ENCODE measurements at regions of chr6 and their contacts with region 1.

Region 1: DNA sequence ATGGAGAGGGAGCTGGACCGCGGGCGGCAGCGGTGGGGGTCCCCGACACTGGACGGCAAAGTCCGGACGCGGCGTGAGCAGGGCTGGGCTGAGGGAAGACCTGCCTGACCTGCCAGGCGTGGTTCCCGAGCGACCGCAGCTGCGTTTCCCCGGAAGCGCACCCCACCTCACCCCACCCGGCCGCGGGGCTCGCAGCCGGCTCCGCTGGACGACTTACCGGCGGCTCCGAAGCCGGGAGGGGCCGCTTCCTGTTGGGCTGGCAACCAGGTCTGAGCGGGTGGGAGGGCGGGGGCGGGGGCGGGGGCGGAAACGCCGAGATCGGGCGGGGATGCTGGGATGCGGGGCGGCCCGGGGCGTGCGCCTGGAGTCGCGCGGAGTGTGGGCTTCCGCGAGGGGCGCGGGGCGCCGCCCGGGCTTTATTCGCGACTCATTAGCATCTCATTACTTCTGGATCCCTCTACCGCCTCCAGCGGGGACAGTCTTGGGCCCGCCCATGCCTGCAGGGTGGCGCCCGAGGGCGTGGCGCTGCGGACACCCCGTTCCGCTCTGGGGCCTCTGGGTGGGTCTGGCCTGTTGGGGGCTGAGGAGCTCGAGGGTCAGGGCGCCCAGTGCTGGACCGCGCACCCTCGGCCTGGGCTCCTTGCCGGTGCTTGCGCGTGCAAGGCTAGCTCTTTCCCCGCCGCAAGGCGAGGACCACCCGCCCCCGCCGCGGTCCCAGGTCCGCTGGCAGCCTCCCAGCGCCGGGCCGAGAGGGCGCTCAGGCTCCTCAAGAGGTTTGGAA is at the start of gene MICAL1:
- DNase-seq: peak; percentile 94
- ATAC-seq: peak; percentile 61
- H3K4me3 ChIP-seq: peak within 1 kb of the TSS; percentile 73 to 99 (median 93)
- H3K4me3 Mint-ChIP-seq: peak within 1 kb of the TSS; percentile 95
- H3K27ac ChIP-seq: peak within 1 kb of the TSS; percentile 98 to 99
- H3K27ac Mint-ChIP-seq: peak within 1 kb of the TSS; percentile 99
- H3K4me1 ChIP-seq: peaks cover 82 to 83% of the 10 kb centered on the region in 2 donors
- H3K4me1 Mint-ChIP-seq: peaks cover 82% of the 10 kb centered on the region
- H3K27me3 ChIP-seq: no peaks in the 10 kb centered on the region
- H3K27me3 Mint-ChIP-seq: no peaks in the 10 kb centered on the region
- CTCF ChIP-seq: peak; percentile 53
- total RNA-seq, gene MICAL1: 202 TPM in 2 replicates

Region 2: GRCh38 chr6:108423982-108424705 is 1031.5 kb before region 1 on chr6:
- CTCF ChIA-PET with region 1: no interaction called
- POLR2A ChIA-PET with region 1: no interaction called
- intact Hi-C with region 1: no loop called
- DNase-seq: no peak
- ATAC-seq: no peak
- H3K4me3 ChIP-seq: no peak overlapping the region
- H3K4me3 Mint-ChIP-seq: no peak overlapping the region
- H3K27ac ChIP-seq: no peak overlapping the region
- H3K27ac Mint-ChIP-seq: no peak overlapping the region
- H3K4me1 ChIP-seq: no peaks in the 10 kb centered on the region
- H3K4me1 Mint-ChIP-seq: no peaks in the 10 kb centered on the region
- H3K27me3 ChIP-seq: no peaks in the 10 kb centered on the region
- H3K27me3 Mint-ChIP-seq: no peaks in the 10 kb centered on the region
- CTCF ChIP-seq: no peak

Region 3: DNA sequence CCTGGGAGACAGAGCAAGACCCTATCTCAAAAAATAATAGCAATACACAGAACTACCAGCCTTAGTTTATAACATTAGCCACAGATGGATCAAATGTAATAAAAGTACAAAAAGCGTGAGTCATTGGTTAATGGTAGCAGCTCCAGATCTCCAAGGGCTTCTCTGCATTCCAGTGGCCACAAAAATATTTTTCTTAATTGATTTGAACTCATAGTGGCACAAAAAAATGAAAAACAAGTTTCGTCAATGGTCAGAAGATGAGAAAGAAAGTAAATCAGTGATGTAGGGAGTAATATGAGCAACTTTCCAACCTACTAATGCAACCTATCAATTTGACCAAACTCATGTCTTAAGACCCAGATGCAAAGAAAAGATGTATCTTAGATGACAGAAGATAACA is 280.8 kb before region 1 on chr6:
- CTCF ChIA-PET with region 1: no interaction called
- POLR2A ChIA-PET with region 1: no interaction called
- intact Hi-C with region 1: no loop called
- DNase-seq: no peak
- ATAC-seq: no peak
- H3K4me3 ChIP-seq: no peak overlapping the region
- H3K4me3 Mint-ChIP-seq: no peak overlapping the region
- H3K27ac ChIP-seq: no peak overlapping the region
- H3K27ac Mint-ChIP-seq: no peak overlapping the region
- H3K4me1 ChIP-seq: no peaks in the 10 kb centered on the region
- H3K4me1 Mint-ChIP-seq: no peaks in the 10 kb centered on the region
- H3K27me3 ChIP-seq: peaks cover 0 to 6% (median 0%) of the 10 kb centered on the region in 4 experiments
- H3K27me3 Mint-ChIP-seq: peaks cover 16% of the 10 kb centered on the region
- CTCF ChIP-seq: no peak

Region 4: GRCh38 chr6:109440331-109441068 is 15.2 kb before region 1 on chr6 and contains the starts of genes PPIL6 and SMPD2:
- CTCF ChIA-PET with region 1: interaction called, 55 read pairs
- POLR2A ChIA-PET with region 1: interaction called, 35 read pairs
- intact Hi-C with region 1: loop called (anchors 1 kb)
- DNase-seq: peak; percentile 94
- ATAC-seq: peak; percentile 87
- H3K4me3 ChIP-seq: peak within 1 kb of the TSS; percentile 0 to 93 (median 90)
- H3K4me3 Mint-ChIP-seq: peak within 1 kb of the TSS; percentile 97
- H3K27ac ChIP-seq: peak within 1 kb of the TSS; percentile 79 to 98
- H3K27ac Mint-ChIP-seq: peak within 1 kb of the TSS; percentile 96
- H3K4me1 ChIP-seq: peaks cover 21 to 30% of the 10 kb centered on the region in 2 donors
- H3K4me1 Mint-ChIP-seq: peaks cover 31% of the 10 kb centered on the region
- H3K27me3 ChIP-seq: no peaks in the 10 kb centered on the region
- H3K27me3 Mint-ChIP-seq: no peaks in the 10 kb centered on the region
- CTCF ChIP-seq: no peak
- total RNA-seq, gene PPIL6: 0.53 and 1.8 TPM in 2 replicates
- total RNA-seq, gene SMPD2: 35.7 and 36.4 TPM in 2 replicates

Region 5: GRCh38 chr6:109482905-109483735 is 27.4 kb after region 1 on chr6 and contains the start of gene ZBTB24:
- CTCF ChIA-PET with region 1: interaction called, 42 read pairs
- POLR2A ChIA-PET with region 1: interaction called, 11 read pairs
- intact Hi-C with region 1: loop called (anchors 1 kb)
- DNase-seq: peak; percentile 93
- ATAC-seq: peak; percentile 83
- H3K4me3 ChIP-seq: peak within 1 kb of the TSS; percentile 76 to 97 (median 94)
- H3K4me3 Mint-ChIP-seq: peak within 1 kb of the TSS; percentile 96
- H3K27ac ChIP-seq: peak within 1 kb of the TSS; percentile 65 to 81
- H3K27ac Mint-ChIP-seq: peak within 1 kb of the TSS; percentile 89
- H3K4me1 ChIP-seq: peaks cover 40 to 57% of the 10 kb centered on the region in 2 donors
- H3K4me1 Mint-ChIP-seq: peaks cover 50% of the 10 kb centered on the region
- H3K27me3 ChIP-seq: no peaks in the 10 kb centered on the region
- H3K27me3 Mint-ChIP-seq: no peaks in the 10 kb centered on the region
- CTCF ChIP-seq: no peak
- total RNA-seq, gene ZBTB24: 31.4 and 32.9 TPM in 2 replicates

Region 6: DNA sequence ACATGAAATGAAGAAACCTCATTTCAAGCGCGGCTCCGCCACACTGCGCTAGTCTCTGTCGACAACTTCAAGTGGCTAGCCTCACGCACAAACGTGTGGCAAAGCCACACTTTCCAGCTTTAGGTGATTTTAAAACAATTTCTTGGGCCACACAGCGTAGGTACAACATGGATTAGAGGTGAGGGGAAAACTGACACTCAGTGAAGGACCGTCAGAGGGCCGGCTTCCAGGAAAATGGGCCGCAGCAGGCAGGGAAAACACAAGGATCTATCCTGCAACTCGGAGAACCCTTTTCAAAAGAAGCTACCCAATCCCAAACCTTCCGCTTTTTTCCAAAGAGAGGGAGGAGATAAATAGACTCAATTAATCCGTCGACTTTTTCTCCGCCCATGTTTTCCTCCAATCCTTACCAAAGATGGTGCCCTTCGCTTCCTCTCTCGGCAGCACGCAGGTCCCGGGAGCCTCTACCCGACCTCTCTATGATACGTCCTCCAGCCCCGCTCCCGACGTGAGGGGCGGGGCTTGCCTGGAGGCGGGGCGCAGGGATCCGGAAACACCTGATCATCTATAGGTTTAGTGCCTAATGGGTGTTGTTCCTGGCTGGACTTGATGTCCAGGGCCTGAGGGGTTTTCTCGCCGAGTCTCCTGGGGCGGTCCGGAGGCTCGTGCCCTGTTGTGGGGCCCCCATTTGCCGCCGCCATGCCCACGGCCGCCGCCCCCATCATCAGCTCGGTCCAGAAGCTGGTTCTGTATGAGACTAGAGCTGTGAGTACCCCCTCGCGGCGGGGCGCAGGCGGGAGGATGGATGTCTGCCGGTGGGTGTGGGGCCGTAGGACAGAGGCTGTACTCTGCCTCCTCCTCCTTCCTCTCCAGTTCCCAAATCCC is 235.3 kb after region 1 on chr6 and contains the starts of genes AK9 and FIG4:
- CTCF ChIA-PET with region 1: no interaction called
- POLR2A ChIA-PET with region 1: interaction called, 6 read pairs
- intact Hi-C with region 1: loop called (anchors 1 kb)
- DNase-seq: peak; percentile 91
- ATAC-seq: peak; percentile 92
- H3K4me3 ChIP-seq: peak within 1 kb of the TSS; percentile 82 to 99 (median 93)
- H3K4me3 Mint-ChIP-seq: peak within 1 kb of the TSS; percentile 90
- H3K27ac ChIP-seq: peak within 1 kb of the TSS; percentile 77 to 93
- H3K27ac Mint-ChIP-seq: peak within 1 kb of the TSS; percentile 99
- H3K4me1 ChIP-seq: peaks cover 26 to 29% of the 10 kb centered on the region in 2 donors
- H3K4me1 Mint-ChIP-seq: peaks cover 39% of the 10 kb centered on the region
- H3K27me3 ChIP-seq: no peaks in the 10 kb centered on the region
- H3K27me3 Mint-ChIP-seq: no peaks in the 10 kb centered on the region
- CTCF ChIP-seq: peak; percentile 26
- total RNA-seq, gene AK9: 26.5 and 27.1 TPM in 2 replicates
- total RNA-seq, gene FIG4: 31.5 and 32.8 TPM in 2 replicates

Region 7: DNA sequence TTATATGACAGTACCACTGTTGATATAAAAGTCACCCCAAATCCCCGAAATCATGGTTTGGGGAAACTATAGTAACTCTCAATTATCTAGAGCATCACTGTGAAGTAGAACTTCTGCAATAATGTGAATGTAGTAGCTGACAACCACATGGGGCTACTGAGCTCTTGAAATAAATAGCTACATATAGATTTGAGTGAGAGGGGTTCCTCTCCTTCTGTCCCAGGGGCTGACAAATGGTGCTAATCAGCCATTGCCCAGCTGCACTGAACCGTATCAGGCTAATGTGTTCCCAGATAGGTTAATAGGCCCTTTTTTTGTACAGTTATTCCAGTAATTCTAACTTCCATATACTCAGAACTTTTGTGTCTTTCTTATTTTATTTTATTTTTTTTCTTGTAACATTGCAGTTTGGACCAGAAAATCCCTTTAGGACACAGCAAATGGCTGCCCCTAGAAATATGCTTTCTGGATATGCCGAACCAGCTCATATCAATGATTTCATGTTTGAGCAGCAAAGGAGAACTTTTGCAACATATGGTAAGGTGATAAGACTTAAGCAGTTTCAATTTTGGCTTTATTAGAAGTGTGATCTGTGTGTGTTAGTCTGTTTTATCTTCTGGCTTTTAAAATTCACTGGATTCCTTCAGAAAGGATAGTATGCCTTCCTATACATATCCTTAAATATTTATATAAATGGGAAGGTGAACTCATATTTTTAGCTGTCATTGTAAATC is 745.6 kb after region 1 on chr6:
- CTCF ChIA-PET with region 1: no interaction called
- POLR2A ChIA-PET with region 1: no interaction called
- intact Hi-C with region 1: loop called (anchors 10 kb)
- DNase-seq: no peak
- ATAC-seq: no peak
- H3K4me3 ChIP-seq: no peak overlapping the region
- H3K4me3 Mint-ChIP-seq: no peak overlapping the region
- H3K27ac ChIP-seq: peak overlapping the region in 1 of 2 donors; percentile 47
- H3K27ac Mint-ChIP-seq: peak overlapping the region; percentile 71
- H3K4me1 ChIP-seq: peaks cover 22 to 33% of the 10 kb centered on the region in 2 donors
- H3K4me1 Mint-ChIP-seq: peaks cover 51% of the 10 kb centered on the region
- H3K27me3 ChIP-seq: no peaks in the 10 kb centered on the region
- H3K27me3 Mint-ChIP-seq: no peaks in the 10 kb centered on the region
- CTCF ChIP-seq: no peak

Measured in B cell (primary cell).